Panc1 (cell line): ENCODE measurements at regions of chr7 and their contacts with region 1.

Region 1: GRCh38 chr7:672891-673290 is 53.6 kb upstream of the DNAAF5 start:
- DNase-seq: no peak
- ATAC-seq: no peak
- H3K4me3 ChIP-seq: no peak overlapping the region
- H3K27ac ChIP-seq: no peak overlapping the region
- H3K4me1 ChIP-seq: no peaks in the 10 kb centered on the region
- H3K27me3 ChIP-seq: no peaks in the 10 kb centered on the region
- CTCF ChIP-seq: no peak

Region 2: GRCh38 chr7:999149-999879 is 326.4 kb after region 1 on chr7:
- CTCF ChIA-PET with region 1: no interaction called
- POLR2A ChIA-PET with region 1: interaction called, 11 read pairs
- in situ Hi-C with region 1: no loop called
- intact Hi-C with region 1: no loop called
- DNase-seq: no peak
- ATAC-seq: no peak
- H3K4me3 ChIP-seq: no peak overlapping the region
- H3K27ac ChIP-seq: no peak overlapping the region
- H3K4me1 ChIP-seq: peaks cover 9% of the 10 kb centered on the region; the same call in 1 of the 2 replicates
- H3K27me3 ChIP-seq: no peaks in the 10 kb centered on the region
- CTCF ChIP-seq: no peak